ENCODE measurements at regions of chr10 and their contacts with region 1.

Region 1: DNA sequence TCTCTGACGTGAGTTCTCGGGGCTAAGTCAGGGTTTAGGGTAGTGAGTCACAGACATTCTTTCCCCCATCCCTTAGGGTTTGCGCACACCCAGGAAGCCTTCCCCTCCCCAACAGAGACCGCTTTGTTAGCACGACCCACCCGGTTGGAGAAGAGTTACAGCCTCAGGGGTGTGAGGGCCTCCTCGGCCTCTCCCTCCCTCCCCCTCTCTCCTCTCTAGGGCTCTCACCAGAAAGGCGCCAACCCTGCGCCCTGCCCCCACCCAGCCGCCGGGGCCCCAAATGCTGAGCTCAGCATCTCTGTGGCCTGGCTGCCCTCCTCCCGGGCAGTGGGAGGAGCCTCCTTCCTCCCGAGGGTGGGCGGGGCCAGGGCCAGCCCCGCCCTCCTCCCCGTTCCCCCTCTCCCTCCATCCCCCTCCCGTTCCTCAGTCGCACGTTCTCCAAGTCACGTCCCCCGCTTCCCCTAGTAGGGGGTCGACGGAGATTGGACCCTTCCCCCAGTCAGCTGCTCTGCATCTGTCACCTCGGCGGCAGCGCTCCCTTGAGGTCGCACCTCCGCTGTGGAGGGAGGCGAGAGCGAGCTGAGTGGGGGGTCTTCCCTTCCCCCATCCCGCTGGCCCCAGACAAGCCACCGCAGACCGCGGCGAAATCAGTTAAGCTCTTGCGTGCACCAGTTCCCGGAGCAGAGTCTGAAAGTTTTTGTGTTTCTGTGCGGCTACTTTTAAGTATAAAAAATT is 13.0 kb upstream of the DDIT4 start:
- DNase-seq: peak; percentile 85
- H3K4me3 Mint-ChIP-seq: peak overlapping the region; percentile 82
- H3K27ac Mint-ChIP-seq: peak overlapping the region; percentile 97
- H3K4me1 Mint-ChIP-seq: peaks cover 51% of the 10 kb centered on the region
- H3K27me3 Mint-ChIP-seq: no peaks in the 10 kb centered on the region

Region 2: GRCh38 chr10:72248468-72249151 is 12.1 kb before region 1 on chr10:
- intact Hi-C with region 1: loop called (anchors 2 kb)
- DNase-seq: peak; percentile 80
- H3K4me3 Mint-ChIP-seq: peak overlapping the region; percentile 69
- H3K27ac Mint-ChIP-seq: peak overlapping the region; percentile 97
- H3K4me1 Mint-ChIP-seq: peaks cover 64% of the 10 kb centered on the region
- H3K27me3 Mint-ChIP-seq: no peaks in the 10 kb centered on the region

Region 3: DNA sequence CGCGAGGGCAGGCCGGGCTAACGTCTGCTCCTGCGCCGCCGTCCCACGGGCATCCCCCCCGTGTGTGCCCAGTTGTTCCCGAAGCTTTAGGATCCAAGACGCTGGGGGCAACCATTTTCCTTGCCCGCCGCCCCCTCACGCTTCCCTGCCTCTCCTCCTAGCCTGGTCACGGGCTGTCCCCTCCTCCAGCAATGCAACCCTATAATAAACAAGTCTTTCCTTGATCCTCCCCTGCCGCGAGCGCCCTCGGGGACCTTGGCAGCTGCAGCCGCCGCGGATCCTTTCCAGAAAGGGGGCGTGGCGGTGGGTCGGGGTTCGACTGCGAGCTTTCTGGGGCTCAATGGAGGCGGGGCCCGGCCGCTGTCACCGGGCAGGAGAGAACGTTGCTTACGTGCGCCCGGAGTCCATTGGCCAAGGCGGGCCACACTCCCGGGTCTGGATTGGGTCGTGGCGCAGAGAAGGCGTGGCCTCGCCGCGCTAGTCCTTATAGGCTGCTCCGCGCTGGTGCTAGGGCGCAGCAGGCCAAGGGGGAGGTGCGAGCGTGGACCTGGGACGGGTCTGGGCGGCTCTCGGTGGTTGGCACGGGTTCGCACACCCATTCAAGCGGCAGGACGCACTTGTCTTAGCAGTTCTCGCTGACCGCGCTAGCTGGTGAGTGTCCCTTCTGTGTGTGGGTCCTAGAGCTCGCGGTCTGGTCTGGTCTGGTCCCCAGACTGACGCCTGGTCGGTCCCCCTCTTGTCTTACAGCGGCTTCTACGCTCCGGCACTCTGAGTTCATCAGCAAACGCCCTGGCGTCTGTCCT is 12.9 kb after region 1 on chr10 and contains the start of gene DDIT4:
- intact Hi-C with region 1: loop called (anchors 1 kb)
- DNase-seq: peak; percentile 99
- H3K4me3 Mint-ChIP-seq: peak within 1 kb of the TSS; percentile 100
- H3K27ac Mint-ChIP-seq: peak within 1 kb of the TSS; percentile 94
- H3K4me1 Mint-ChIP-seq: peaks cover 43% of the 10 kb centered on the region
- H3K27me3 Mint-ChIP-seq: no peaks in the 10 kb centered on the region
- total RNA-seq, gene DDIT4: 543 and 569 TPM in 2 replicates

Region 4: GRCh38 chr10:72292223-72292691 is 31.5 kb after region 1 on chr10:
- intact Hi-C with region 1: loop called (anchors 1 kb)
- DNase-seq: no peak
- H3K4me3 Mint-ChIP-seq: peak overlapping the region; percentile 17
- H3K27ac Mint-ChIP-seq: peak overlapping the region; percentile 78
- H3K4me1 Mint-ChIP-seq: peaks cover 55% of the 10 kb centered on the region
- H3K27me3 Mint-ChIP-seq: no peaks in the 10 kb centered on the region

Region 5: DNA sequence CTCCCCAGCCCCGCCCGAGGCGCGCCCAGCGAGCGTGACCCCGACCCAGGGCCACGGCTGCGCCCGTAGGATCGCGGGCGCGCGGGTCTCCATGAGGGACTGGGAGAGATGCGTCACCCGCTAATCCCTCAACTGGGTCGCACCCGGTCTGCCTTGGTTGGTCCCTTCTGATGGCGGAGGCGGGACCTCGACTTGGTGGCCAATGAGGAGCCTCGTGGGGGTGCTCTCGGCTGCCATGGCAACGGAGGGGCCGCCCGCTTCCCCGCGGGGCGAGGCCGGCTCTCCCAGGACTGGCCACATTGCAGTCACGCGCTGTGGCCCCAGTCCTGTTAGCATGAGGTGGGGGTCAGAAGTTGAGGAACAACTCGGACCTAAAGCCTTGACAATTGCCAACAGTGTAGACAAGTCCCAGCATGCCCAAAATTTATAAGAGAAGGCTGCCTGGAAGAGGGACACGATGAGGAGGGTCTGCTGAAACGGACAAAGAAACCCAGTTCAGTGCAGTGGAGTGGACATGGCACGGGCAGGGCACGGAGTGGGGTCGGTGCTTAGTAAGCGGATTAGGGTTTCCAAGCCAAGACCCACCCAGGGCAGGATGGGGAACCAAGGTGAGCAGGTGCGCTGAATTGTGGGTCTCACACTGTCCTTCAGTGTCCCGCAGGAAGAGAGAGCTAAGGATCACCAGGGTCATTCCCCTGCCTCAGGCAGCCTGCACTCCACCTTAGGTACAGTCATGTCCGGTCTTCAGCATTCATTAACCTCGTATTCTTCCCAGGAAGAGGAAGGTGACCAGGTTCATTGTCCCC is 37.4 kb after region 1 on chr10:
- intact Hi-C with region 1: loop called (anchors 1 kb)
- DNase-seq: peak; percentile 91
- H3K4me3 Mint-ChIP-seq: peak overlapping the region; percentile 76
- H3K27ac Mint-ChIP-seq: peak overlapping the region; percentile 98
- H3K4me1 Mint-ChIP-seq: peaks cover 50% of the 10 kb centered on the region
- H3K27me3 Mint-ChIP-seq: no peaks in the 10 kb centered on the region

Region 6: GRCh38 chr10:72449915-72450441 is 189.2 kb after region 1 on chr10:
- intact Hi-C with region 1: no loop called
- DNase-seq: no peak
- H3K4me3 Mint-ChIP-seq: no peak overlapping the region
- H3K27ac Mint-ChIP-seq: no peak overlapping the region
- H3K4me1 Mint-ChIP-seq: no peaks in the 10 kb centered on the region
- H3K27me3 Mint-ChIP-seq: no peaks in the 10 kb centered on the region

Measured in activated T-helper 2 cell treated with anti-CD3 and anti-CD28 coated beads, Interferon-gamma antibody, Interleukin-2, Interleukin-4, amounts not matched to agents 10 μg/mL and 5 μg/mL and 100 μg/mL, durations not matched to agents 14 hours and 24 hours and 36 hours (primary cell).